Prostate gland (tissue), 2 donors: ENCODE measurements at regions of chr18 and their contacts with region 1.

Region 1: GRCh38 chr18:50786864-50787263 is 33.0 kb downstream of the MRO start:
- DNase-seq: no peak
- H3K4me3 ChIP-seq: no peak overlapping the region
- H3K27ac ChIP-seq: no peak overlapping the region
- H3K4me1 ChIP-seq: no peaks in the 10 kb centered on the region
- H3K27me3 ChIP-seq: no peaks in the 10 kb centered on the region
- CTCF ChIP-seq: no peak
- POLR2A ChIP-seq: no peak

Region 2: GRCh38 chr18:50507120-50507590 is 279.7 kb before region 1 on chr18:
- intact Hi-C with region 1: loop called (anchors 2 kb)
- DNase-seq: peak; percentile 29
- H3K4me3 ChIP-seq: no peak overlapping the region
- H3K27ac ChIP-seq: no peak overlapping the region
- H3K4me1 ChIP-seq: no peaks in the 10 kb centered on the region
- H3K27me3 ChIP-seq: no peaks in the 10 kb centered on the region
- CTCF ChIP-seq: peak in 3 of 4 experiments; percentile 66 to 83 (median 72)
- POLR2A ChIP-seq: no peak